Left colon (tissue), 2 donors: ENCODE measurements at regions of chr9 and their contacts with region 1.

Region 1: GRCh38 chr9:102985162-102985895 is 9.8 kb upstream of the CYLC2 start:
- DNase-seq: no peak
- ATAC-seq: no peak

Region 2: DNA sequence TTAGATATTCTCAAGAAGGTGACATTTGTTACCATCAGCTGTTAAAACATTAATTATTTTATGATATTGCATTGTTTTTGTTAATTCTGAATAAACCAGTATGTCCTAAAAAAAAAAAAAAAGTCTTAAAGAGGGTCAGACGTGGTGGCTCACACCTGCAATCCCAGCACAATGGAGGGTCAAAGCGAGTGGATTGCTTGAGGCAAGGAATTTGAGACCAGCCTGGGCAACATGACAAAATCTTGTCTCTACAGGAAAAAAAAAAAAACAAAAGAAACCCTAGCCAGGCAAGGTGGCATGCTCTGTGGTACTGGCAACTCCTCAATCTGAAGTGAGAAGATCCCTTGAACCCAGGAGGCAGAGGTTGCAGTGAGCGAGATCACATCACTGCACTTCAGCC is 56.6 kb after region 1 on chr9:
- intact Hi-C with region 1: loop called in 1 of 2 experiments (anchors 10 kb)
- DNase-seq: no peak
- ATAC-seq: no peak

Region 3: GRCh38 chr9:103078581-103078980 is 93.3 kb after region 1 on chr9:
- intact Hi-C with region 1: no loop called
- DNase-seq: no peak
- ATAC-seq: no peak